Activated CD4-positive, alpha-beta memory T cell treated with anti-CD3 and anti-CD28 coated beads for 36 hours (primary cell): ENCODE measurements at regions of chr3 and their contacts with region 1.

Region 1: DNA sequence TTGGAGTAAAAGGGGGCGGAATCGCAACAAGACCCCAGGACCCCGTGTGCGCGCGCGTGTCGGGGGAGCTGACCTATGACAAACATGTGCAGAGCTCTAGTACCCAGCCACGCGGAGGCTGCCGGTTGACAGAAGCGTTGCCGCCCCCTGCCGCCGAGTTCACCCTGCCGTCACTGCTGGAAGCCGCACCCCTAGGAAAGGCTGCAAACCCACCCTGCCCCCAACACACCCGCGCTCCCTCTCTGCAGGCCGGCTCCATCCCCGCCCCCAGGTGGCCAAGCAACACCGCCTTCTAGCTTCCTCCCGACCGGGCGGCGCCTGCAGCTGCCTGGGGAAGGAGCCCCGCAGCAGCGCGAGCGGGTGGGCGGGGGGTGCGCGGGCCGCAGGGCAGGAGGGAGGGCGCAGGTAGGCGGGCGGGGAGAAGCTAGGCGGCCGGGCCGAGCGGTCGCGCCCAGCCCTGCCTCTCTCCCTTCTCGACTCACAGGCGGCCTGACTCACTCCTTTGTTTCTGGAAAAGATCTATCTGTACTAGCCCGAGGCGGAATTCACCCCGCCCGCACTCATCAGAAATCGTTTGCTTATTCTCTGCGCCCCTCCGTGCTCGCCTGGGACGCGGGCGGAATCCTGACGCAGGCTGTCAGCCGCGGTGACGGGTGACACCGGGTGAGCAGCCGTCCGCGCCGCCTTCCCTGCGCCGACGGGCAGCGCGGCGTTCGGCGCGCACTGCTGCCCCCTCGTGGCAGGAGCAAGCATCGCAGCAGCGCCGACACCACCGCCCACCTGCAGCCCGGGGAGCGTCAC is 160.8 kb downstream of the GAP43 start:
- DNase-seq: peak; percentile 92
- H3K4me3 Mint-ChIP-seq: peak overlapping the region; percentile 88
- H3K27ac Mint-ChIP-seq: peak overlapping the region; percentile 94
- H3K4me1 Mint-ChIP-seq: peaks cover 19% of the 10 kb centered on the region
- H3K27me3 Mint-ChIP-seq: no peaks in the 10 kb centered on the region

Region 2: DNA sequence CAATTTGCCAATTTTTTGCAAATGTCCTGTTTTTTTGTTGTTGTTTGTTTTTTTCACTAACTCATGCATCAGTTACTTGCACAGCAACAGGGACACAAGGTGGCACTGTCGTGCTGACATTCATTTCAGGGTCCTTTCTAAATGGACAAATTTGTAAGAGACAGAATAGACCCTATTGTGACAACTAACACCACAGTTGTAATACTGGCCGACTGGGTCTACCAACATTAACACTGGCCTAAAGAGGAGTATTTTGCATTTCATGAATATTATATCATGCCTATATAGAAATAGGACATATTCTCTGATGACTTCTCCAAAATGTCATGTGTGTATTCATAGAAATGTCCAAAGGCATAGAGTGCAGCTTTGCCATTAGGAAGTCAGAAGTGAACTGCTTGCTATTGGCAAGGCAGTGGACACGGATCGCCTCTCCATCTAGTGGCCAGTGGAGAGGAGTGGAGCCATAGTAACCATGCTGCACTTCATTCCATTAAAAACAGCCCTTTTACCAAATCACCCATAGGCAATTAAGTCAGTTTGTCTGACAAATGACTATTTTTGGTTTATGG is 691.8 kb before region 1 on chr3:
- CTCF ChIA-PET with region 1: interaction called, 9 read pairs
- POLR2A ChIA-PET with region 1: no interaction called
- intact Hi-C with region 1: loop called (anchors 2 kb)
- DNase-seq: peak; percentile 65
- H3K4me3 Mint-ChIP-seq: no peak overlapping the region
- H3K27ac Mint-ChIP-seq: no peak overlapping the region
- H3K4me1 Mint-ChIP-seq: peaks cover 13% of the 10 kb centered on the region
- H3K27me3 Mint-ChIP-seq: no peaks in the 10 kb centered on the region

Region 3: GRCh38 chr3:115169808-115170207 is 614.3 kb before region 1 on chr3:
- CTCF ChIA-PET with region 1: interaction called, 3 read pairs
- POLR2A ChIA-PET with region 1: no interaction called
- intact Hi-C with region 1: loop called (anchors 5 kb)
- DNase-seq: no peak
- H3K4me3 Mint-ChIP-seq: no peak overlapping the region
- H3K27ac Mint-ChIP-seq: no peak overlapping the region
- H3K4me1 Mint-ChIP-seq: peaks cover 12% of the 10 kb centered on the region
- H3K27me3 Mint-ChIP-seq: no peaks in the 10 kb centered on the region

Region 4: DNA sequence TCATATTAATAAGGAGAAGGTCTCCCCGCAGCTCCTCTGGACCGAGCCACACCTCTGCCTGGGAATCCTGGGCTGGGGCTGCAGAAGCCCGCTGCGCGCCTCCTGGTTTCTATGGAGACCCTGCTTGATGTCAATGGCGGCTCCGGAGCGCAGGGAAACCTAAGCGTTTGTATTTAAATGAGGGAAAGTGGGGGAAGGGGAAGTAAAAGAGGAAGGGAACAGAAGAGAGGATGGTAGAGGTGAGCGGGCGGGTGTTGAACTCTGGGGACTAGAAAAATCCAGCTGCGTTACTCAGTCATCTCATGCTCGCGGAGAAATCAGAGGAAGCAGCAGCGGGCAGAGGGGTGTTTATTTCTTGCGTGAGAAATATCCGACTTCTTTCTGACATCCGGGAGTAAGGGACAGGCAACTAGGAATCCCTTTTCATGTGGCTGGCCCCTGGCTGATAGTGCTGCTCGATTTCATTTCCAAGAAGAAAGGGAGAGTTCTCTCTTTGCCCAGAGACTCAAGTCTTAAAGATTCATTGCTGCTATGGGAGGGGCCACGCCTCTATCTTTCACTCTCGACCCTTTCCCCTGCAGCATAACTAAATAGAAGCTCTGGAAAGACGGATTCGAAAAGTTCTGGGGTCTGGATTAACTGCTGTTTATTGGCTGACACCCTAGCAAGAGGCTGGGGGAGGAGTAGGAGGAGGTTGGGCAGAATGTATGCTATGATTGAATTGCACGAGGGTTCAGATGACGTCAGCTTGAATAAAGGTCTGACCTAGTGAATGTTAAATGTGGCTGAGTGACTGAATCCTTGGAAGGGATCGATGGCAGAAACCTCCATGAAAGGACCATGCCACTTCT is 271.3 kb before region 1 on chr3:
- CTCF ChIA-PET with region 1: no interaction called
- POLR2A ChIA-PET with region 1: no interaction called
- intact Hi-C with region 1: loop called (anchors 10 kb)
- DNase-seq: peak; percentile 40
- H3K4me3 Mint-ChIP-seq: peak overlapping the region; percentile 79
- H3K27ac Mint-ChIP-seq: no peak overlapping the region
- H3K4me1 Mint-ChIP-seq: peaks cover 13% of the 10 kb centered on the region
- H3K27me3 Mint-ChIP-seq: peaks cover 14% of the 10 kb centered on the region

Region 5: GRCh38 chr3:115692887-115693524 is 91.1 kb before region 1 on chr3:
- CTCF ChIA-PET with region 1: interaction called, 14 read pairs
- POLR2A ChIA-PET with region 1: no interaction called
- intact Hi-C with region 1: loop called (anchors 2 kb)
- DNase-seq: peak; percentile 78
- H3K4me3 Mint-ChIP-seq: no peak overlapping the region
- H3K27ac Mint-ChIP-seq: no peak overlapping the region
- H3K4me1 Mint-ChIP-seq: no peaks in the 10 kb centered on the region
- H3K27me3 Mint-ChIP-seq: no peaks in the 10 kb centered on the region

Region 6: GRCh38 chr3:115814778-115815380 is 30.7 kb after region 1 on chr3:
- CTCF ChIA-PET with region 1: interaction called, 21 read pairs
- POLR2A ChIA-PET with region 1: no interaction called
- intact Hi-C with region 1: loop called (anchors 1 kb)
- DNase-seq: peak; percentile 78
- H3K4me3 Mint-ChIP-seq: no peak overlapping the region
- H3K27ac Mint-ChIP-seq: no peak overlapping the region
- H3K4me1 Mint-ChIP-seq: no peaks in the 10 kb centered on the region
- H3K27me3 Mint-ChIP-seq: peaks cover 2% of the 10 kb centered on the region